Tibial artery (tissue), 4 donors: ENCODE measurements at regions of chr12 and their contacts with region 1.

Region 1: GRCh38 chr12:10613349-10614055 is at the start of gene MAGOHB:
- DNase-seq: peak; percentile 93 to 97
- H3K4me3 ChIP-seq: peak within 1 kb of the TSS; percentile 66 to 76
- H3K27ac ChIP-seq: peak within 1 kb of the TSS; percentile 84 to 89
- H3K4me1 ChIP-seq: peaks cover 0 to 25% (median 10%) of the 10 kb centered on the region in 4 donors
- H3K27me3 ChIP-seq: no peaks in the 10 kb centered on the region
- CTCF ChIP-seq: peak in 1 of 2 experiments; percentile 14

Region 2: DNA sequence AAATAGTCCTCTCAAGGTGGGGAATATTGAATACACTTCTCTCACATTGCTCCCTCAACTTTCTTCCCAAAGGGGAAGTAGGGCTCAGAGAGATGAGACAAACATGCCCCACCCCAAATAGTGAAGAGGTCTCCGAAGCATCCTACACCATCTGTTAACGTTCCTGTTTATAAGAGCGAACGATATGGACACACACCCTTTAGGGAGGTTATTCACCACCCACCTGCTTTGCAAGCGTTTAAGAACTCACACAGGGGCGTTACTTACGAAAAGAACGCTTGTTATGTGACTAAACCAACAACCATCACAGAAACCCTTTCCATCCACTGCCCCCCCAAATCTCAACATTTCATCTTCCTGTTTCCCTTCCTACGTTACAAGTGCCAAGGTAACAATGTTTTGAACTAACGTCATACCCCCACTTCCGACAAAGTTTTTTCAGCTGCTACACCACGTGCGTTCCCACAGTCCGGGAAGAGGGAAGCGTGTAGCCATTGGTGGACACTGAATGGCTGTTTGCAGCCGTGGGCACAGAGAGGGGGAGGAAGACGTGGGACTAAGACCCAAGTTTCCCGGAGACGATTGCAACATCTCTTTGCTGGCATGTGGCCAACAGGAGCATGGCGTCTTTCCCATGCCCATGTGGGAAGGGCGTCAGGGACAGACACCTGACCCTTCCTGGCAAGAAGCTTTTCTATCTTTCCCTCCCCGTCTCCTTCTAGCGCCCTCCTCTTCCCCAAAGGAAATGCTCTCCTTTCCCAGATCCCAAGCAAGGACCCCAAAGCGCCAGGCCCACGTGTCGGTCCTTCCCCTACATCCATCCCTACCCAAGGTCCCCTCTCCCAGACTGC is 108.4 kb after region 1 on chr12:
- intact Hi-C with region 1: loop called (anchors 10 kb)
- DNase-seq: peak; percentile 96 to 99
- H3K4me3 ChIP-seq: peak overlapping the region; percentile 71 to 98
- H3K27ac ChIP-seq: peak overlapping the region; percentile 95 to 97
- H3K4me1 ChIP-seq: peaks cover 0 to 53% (median 29%) of the 10 kb centered on the region in 4 donors
- H3K27me3 ChIP-seq: no peaks in the 10 kb centered on the region
- CTCF ChIP-seq: no peak

Region 3: GRCh38 chr12:10749700-10750384 is 136.3 kb after region 1 on chr12:
- intact Hi-C with region 1: loop called (anchors 5 kb)
- DNase-seq: peak; percentile 84
- H3K4me3 ChIP-seq: peak overlapping the region; percentile 28 to 40
- H3K27ac ChIP-seq: peak overlapping the region; percentile 53 to 59
- H3K4me1 ChIP-seq: peaks cover 0 to 10% (median 0%) of the 10 kb centered on the region in 4 donors
- H3K27me3 ChIP-seq: peaks cover 0 to 7% of the 10 kb centered on the region in 2 donors
- CTCF ChIP-seq: peak; percentile 88

Region 4: GRCh38 chr12:10802587-10802986 is 189.1 kb after region 1 on chr12 and contains the start of gene TAS2R7:
- intact Hi-C with region 1: no loop called
- DNase-seq: no peak
- H3K4me3 ChIP-seq: no peak within 1 kb of the TSS
- H3K27ac ChIP-seq: no peak within 1 kb of the TSS
- H3K4me1 ChIP-seq: no peaks in the 10 kb centered on the region
- H3K27me3 ChIP-seq: no peaks in the 10 kb centered on the region
- CTCF ChIP-seq: no peak